Activated CD4-positive, alpha-beta memory T cell treated with anti-CD3 and anti-CD28 coated beads for 36 hours (primary cell): ENCODE measurements at regions of chr1 and their contacts with region 1.

Region 1: GRCh38 chr1:9292361-9293240 is at the start of gene SPSB1:
- DNase-seq: peak; percentile 79
- H3K4me3 Mint-ChIP-seq: peak within 1 kb of the TSS; percentile 37
- H3K27ac Mint-ChIP-seq: no peak within 1 kb of the TSS
- H3K4me1 Mint-ChIP-seq: peaks cover 34% of the 10 kb centered on the region
- H3K27me3 Mint-ChIP-seq: peaks cover 3% of the 10 kb centered on the region
- total RNA-seq, gene SPSB1: 11.0 to 12.5 TPM

Region 2: DNA sequence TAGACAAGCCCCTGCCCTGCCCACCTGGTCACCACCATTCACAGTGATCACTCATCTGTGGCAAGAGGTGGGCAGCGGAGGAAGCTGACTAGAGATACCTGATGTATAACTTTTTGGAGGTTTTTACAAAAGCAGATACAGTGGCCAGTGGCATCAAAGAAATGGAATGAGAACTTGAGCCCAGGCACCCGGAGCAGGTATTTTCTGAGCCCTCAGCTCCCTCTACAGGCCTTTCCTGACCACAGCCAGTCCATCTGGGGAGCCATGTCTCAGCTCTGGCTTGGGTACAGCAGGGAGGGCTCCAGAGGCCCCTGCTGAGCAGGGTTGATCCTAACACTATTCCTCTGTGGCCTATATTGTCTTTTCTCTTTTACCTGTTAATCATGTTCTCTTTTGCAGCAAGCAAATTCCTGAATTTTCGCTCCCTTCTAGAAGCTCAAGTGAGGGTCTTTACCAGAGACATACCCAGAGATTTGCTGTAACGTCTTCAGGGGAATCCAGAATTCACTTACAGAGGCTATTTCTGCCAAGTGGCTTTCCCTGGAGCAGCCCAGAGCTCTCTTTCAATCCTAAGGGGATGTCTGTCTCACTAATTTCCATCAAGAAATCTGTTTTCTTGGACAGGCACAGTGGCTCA is 191.0 kb before region 1 on chr1:
- CTCF ChIA-PET with region 1: no interaction called
- POLR2A ChIA-PET with region 1: no interaction called
- intact Hi-C with region 1: no loop called
- DNase-seq: peak; percentile 45
- H3K4me3 Mint-ChIP-seq: no peak overlapping the region
- H3K27ac Mint-ChIP-seq: no peak overlapping the region
- H3K4me1 Mint-ChIP-seq: no peaks in the 10 kb centered on the region
- H3K27me3 Mint-ChIP-seq: no peaks in the 10 kb centered on the region

Region 3: GRCh38 chr1:9275567-9276034 is 17.0 kb before region 1 on chr1:
- CTCF ChIA-PET with region 1: interaction called, 36 read pairs
- POLR2A ChIA-PET with region 1: no interaction called
- intact Hi-C with region 1: loop called (anchors 2 kb)
- DNase-seq: peak; percentile 94
- H3K4me3 Mint-ChIP-seq: no peak overlapping the region
- H3K27ac Mint-ChIP-seq: no peak overlapping the region
- H3K4me1 Mint-ChIP-seq: peaks cover 35% of the 10 kb centered on the region
- H3K27me3 Mint-ChIP-seq: peaks cover 6% of the 10 kb centered on the region

Region 4: DNA sequence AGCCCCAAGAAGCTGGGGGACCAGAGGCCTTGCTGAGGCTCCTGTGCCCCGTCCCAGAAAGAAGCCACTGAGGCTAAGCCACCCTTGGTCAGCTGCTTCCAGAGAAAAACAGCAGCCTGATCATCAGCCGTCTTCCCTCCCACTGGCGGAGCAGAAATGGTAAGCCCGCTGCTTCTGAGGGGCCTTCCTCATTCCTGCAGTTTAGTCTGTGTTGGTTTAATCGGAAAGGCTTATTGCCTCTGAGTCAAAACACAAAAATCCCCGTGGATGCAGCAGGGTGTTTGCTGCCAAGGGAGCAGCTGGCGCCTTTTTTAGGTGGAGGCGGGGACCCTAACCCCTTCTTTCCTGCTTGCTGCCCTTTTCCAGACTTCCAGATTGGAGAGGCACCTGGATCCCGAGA is 34.0 kb after region 1 on chr1:
- CTCF ChIA-PET with region 1: no interaction called
- POLR2A ChIA-PET with region 1: no interaction called
- intact Hi-C with region 1: no loop called
- DNase-seq: no peak
- H3K4me3 Mint-ChIP-seq: no peak overlapping the region
- H3K27ac Mint-ChIP-seq: no peak overlapping the region
- H3K4me1 Mint-ChIP-seq: peaks cover under 1% of the 10 kb centered on the region
- H3K27me3 Mint-ChIP-seq: no peaks in the 10 kb centered on the region

Region 5: DNA sequence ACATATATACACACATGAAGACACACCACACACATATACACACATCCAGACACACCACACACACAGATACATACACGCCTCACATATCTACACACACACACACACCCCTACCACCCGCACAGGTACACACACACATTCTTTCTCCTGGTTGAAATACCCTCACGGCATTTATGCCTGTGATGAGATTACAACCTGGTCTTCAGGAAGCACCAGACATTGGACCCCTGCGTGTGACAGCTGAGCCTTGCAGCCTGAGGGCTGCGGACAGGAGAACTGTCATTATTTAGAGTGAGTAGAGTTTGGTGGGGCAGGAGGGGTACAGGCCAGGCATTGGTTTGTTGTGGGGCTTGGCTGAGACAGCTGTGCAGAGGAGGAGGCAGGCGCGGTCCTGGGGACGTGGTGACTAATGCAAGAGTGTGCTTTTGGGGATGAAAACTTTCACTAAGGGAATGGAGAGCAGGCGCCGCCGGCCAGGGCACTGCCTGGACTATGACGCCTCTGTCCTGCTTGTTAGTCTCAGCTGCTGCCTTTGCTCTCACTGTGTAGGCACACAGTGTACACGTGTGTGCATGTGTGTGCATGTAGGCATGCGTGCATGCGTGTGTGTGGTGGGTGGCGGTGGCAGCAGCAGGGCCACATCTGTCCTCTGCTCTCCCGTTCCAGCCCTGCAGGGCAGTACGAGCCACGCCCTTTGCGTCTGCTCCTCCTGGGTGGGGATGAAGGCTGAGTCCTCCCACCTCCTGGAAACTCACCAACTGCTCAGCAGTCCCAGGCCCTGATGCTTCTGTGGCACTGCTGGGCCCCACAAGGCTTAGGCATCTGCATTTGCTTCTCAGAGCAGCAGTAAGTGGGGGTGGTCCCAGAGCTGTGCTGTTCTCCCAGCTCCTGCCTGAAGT is 57.7 kb after region 1 on chr1:
- CTCF ChIA-PET with region 1: no interaction called
- POLR2A ChIA-PET with region 1: no interaction called
- intact Hi-C with region 1: no loop called
- DNase-seq: no peak
- H3K4me3 Mint-ChIP-seq: no peak overlapping the region
- H3K27ac Mint-ChIP-seq: no peak overlapping the region
- H3K4me1 Mint-ChIP-seq: peaks cover 10% of the 10 kb centered on the region
- H3K27me3 Mint-ChIP-seq: no peaks in the 10 kb centered on the region

Region 6: DNA sequence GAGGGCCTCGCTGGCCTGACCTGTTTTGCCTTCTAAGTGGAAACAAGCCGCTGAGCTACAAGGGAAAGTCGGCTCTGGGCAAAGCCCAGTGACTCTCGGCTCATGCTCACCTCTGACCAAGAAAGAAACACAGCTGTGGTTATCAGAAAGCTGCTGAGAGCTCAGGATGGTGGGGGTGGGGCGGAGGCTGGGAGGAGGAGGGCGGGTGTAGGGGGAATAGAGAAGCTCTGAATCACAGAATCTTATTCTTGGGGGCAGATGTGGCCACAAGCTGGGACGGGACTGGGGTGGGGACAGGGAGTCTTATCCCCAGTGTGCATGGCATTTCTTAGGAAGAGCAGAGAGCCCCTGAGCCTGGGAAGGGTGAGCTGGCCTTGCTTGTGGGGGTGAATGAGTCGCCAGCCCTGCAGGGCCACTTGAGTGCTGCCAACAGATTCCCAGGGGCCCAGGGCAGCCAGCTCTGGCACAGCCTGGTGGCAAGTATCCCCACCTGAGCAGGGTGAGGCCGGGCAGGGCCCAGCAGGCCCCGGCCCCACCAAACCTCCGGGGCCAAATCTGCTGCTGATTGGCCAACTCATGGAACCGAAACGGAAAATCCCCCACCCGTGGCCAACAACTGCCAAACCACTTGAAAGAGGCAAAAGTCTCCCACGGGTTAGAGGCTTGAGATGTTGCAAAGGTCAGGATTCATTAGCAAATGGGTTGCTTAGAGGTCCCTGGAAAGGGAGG is 120.7 kb after region 1 on chr1:
- CTCF ChIA-PET with region 1: interaction called, 9 read pairs
- POLR2A ChIA-PET with region 1: no interaction called
- intact Hi-C with region 1: loop called (anchors 2 kb)
- DNase-seq: peak; percentile 90
- H3K4me3 Mint-ChIP-seq: no peak overlapping the region
- H3K27ac Mint-ChIP-seq: peak overlapping the region; percentile 56
- H3K4me1 Mint-ChIP-seq: peaks cover 51% of the 10 kb centered on the region
- H3K27me3 Mint-ChIP-seq: peaks cover 5% of the 10 kb centered on the region

Region 7: DNA sequence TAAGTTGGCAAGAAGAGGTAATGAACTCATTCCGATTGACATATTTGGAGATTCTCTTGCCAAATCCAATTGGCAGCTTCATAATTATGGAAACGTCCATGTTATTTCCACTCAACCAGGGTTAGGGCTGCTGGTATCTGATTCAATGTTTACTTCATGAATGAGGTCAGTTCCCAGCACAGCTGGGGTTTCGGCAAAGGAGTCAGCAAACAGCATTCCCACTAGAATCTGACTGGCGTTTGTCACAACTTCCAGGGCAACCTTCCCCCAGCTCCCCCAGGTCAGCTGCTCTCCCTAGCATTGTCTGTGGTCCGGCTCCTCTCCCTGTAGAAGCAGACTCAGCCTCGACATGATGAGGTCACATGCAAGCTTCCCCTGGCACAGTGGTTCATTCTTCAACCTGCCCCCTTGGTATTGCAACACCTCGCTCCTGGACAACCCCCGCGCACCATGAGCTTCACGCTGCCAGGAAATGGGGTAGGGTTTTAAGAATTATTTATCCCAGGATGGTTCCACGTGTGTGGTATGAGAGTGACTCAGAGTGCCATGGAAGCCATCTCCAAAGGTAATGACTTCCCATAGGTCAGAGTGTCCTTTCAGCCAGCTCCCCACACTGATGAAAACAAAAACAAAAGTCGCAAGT is 146.0 kb after region 1 on chr1:
- CTCF ChIA-PET with region 1: interaction called, 12 read pairs
- POLR2A ChIA-PET with region 1: no interaction called
- intact Hi-C with region 1: no loop called
- DNase-seq: no peak
- H3K4me3 Mint-ChIP-seq: no peak overlapping the region
- H3K27ac Mint-ChIP-seq: no peak overlapping the region
- H3K4me1 Mint-ChIP-seq: no peaks in the 10 kb centered on the region
- H3K27me3 Mint-ChIP-seq: peaks cover 12% of the 10 kb centered on the region

Region 8: DNA sequence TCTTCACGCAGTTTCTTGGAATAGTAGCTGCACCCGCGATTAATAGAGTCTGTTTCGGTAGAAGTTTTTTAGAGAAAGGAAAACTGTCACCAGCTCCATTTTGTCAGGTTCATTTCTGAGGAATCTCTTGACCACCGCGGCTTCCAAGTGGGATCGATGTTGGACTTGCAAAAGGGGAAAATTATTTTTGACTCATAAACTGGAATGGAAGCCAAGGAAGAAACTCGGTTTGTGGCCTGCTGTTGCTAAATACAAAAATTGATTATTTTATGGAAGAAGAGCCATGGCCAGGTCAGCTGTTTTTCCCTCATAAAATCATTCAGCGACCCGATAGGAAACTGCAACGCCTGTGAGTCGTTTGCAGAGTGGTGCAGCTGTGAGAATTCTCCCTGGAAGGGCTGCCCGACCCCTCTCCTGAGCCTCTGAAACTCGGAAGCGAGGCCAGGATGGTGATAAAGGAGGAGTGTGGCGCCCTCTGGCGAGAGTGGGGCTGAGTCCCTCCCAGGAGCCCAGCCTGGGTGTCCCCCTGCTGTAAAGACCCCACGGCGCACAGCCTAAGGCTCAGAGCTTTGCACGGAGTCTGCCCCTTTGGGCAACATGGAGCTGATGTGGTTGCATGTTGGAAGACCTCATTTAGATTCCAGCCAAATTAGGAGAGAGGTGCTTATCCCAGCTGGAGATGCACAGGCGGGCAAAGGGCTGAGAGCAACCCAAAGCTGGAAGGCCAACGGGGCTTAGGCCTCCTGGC is 163.1 kb after region 1 on chr1:
- CTCF ChIA-PET with region 1: interaction called, 186 read pairs
- POLR2A ChIA-PET with region 1: no interaction called
- intact Hi-C with region 1: loop called (anchors 1 kb)
- DNase-seq: peak; percentile 74
- H3K4me3 Mint-ChIP-seq: no peak overlapping the region
- H3K27ac Mint-ChIP-seq: no peak overlapping the region
- H3K4me1 Mint-ChIP-seq: no peaks in the 10 kb centered on the region
- H3K27me3 Mint-ChIP-seq: no peaks in the 10 kb centered on the region

Region 9: DNA sequence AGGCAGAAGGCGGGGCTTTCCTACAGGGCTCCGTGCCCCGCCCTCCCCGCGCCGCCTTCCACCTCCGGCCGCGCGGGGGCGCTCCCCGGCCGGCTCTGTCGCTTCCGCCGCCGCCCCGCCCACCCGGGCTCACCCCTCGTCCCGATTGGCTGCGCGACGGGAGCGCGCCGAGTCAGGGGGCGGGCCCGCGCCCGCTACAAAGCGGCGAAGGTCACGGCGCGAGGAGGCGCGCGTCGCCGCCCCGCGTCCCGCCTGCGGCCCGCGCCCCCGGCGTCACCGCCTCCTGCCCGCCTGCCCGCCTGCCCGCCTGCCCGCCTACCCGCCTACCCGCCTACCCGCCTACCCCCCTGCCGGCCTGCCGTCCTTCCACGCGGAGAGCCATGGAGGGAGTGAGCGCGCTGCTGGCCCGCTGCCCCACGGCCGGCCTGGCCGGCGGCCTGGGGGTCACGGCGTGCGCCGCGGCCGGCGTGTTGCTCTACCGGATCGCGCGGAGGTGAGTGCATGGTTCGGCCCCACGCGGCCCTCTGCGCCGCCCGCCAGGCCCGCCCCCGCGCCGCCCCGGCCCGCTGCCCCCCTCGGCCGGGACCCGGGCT is 296.0 kb after region 1 on chr1 and contains the start of gene TMEM201:
- CTCF ChIA-PET with region 1: interaction called, 3 read pairs
- POLR2A ChIA-PET with region 1: no interaction called
- intact Hi-C with region 1: loop called (anchors 5 kb)
- DNase-seq: peak; percentile 95
- H3K4me3 Mint-ChIP-seq: peak within 1 kb of the TSS; percentile 82
- H3K27ac Mint-ChIP-seq: peak within 1 kb of the TSS; percentile 35
- H3K4me1 Mint-ChIP-seq: peaks cover 31% of the 10 kb centered on the region
- H3K27me3 Mint-ChIP-seq: no peaks in the 10 kb centered on the region
- total RNA-seq, gene TMEM201: 12.2 to 14.0 TPM